Activated CD4-positive, alpha-beta T cell treated with anti-CD3 and anti-CD28 coated beads, Interleukin-2, amount 10 ng/mL, durations not matched to agents 24 days and 14 days (primary cell): ENCODE measurements at regions of chr11 and their contacts with region 1.

Region 1: DNA sequence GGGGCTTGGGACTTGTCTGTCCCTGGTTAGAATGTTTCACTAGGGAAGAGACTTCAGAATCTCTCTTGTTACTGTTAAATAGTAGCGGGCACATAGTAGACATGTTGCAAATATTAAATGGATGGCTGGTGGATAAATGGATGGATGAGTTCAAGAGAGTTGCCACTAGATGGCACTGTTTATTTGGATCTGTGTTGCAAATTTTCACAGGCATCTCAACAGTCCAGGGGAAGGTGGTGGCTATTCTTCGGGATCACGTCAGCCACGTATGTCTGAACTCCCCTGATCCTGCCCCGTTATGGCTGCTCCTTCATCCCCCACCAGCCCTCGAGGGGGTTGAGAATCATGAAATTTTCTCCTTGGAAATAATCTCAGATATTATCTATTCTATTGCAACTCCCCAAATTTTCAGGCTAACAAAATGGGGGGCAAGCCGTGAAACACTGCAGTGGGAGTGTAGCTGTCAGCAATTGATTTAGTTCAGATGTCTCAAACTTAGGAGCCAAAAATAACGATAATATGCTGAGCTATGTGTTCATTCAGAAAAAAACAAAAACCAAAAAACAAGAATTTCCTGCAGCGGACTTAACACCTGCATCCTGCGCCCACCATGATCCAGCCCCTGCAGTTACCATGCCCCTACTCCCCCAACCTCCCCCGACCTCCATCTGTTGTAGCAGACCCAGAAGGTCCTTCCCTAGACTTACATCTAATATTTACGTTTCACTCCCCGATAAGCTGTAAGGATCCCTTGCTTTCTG is 29.1 kb upstream of the BIRC3 start:
- DNase-seq: peak; percentile 84
- H3K4me3 Mint-ChIP-seq: peak overlapping the region; percentile 41
- H3K27ac Mint-ChIP-seq: peak overlapping the region; percentile 21
- H3K4me1 Mint-ChIP-seq: peaks cover 31% of the 10 kb centered on the region
- H3K27me3 Mint-ChIP-seq: no peaks in the 10 kb centered on the region

Region 2: GRCh38 chr11:102317099-102317767 is 29.1 kb after region 1 on chr11 and contains the start of gene BIRC3:
- intact Hi-C with region 1: loop called (anchors 1 kb)
- DNase-seq: peak; percentile 97
- H3K4me3 Mint-ChIP-seq: peak within 1 kb of the TSS; percentile 91
- H3K27ac Mint-ChIP-seq: peak within 1 kb of the TSS; percentile 93
- H3K4me1 Mint-ChIP-seq: peaks cover 64% of the 10 kb centered on the region
- H3K27me3 Mint-ChIP-seq: peaks cover 2% of the 10 kb centered on the region
- total RNA-seq, gene BIRC3: 100 and 102 TPM in 2 replicates

Region 3: DNA sequence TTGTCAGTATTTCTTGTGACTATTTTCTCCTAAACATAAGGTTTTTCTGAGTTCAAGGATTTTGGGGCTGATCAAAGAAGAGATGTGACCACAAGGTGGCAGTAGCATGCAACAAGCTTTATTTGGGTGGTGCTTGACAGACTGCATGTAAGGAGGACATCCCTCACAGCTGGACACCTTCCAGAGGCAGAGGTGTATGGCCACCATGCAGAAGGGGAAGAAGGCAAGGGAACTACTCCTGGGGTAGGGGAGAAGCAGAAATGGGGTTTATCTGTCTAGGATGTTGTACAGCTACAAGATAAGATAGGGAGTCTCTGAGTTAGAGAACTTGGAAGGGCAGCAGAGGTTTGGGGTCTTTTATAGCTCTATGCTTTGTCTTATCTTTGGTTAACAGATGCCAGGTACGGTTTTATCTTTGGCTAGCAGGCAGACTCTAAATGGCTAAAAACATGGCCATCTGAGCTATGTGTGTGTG is 53.7 kb after region 1 on chr11:
- intact Hi-C with region 1: loop called (anchors 1 kb)
- DNase-seq: peak; percentile 92
- H3K4me3 Mint-ChIP-seq: no peak overlapping the region
- H3K27ac Mint-ChIP-seq: no peak overlapping the region
- H3K4me1 Mint-ChIP-seq: peaks cover 28% of the 10 kb centered on the region
- H3K27me3 Mint-ChIP-seq: no peaks in the 10 kb centered on the region

Region 4: GRCh38 chr11:102495161-102496042 is 207.3 kb after region 1 on chr11:
- intact Hi-C with region 1: loop called (anchors 1 kb)
- DNase-seq: peak; percentile 86
- H3K4me3 Mint-ChIP-seq: no peak overlapping the region
- H3K27ac Mint-ChIP-seq: peak overlapping the region; percentile 24
- H3K4me1 Mint-ChIP-seq: peaks cover 27% of the 10 kb centered on the region
- H3K27me3 Mint-ChIP-seq: peaks cover 14% of the 10 kb centered on the region

Region 5: DNA sequence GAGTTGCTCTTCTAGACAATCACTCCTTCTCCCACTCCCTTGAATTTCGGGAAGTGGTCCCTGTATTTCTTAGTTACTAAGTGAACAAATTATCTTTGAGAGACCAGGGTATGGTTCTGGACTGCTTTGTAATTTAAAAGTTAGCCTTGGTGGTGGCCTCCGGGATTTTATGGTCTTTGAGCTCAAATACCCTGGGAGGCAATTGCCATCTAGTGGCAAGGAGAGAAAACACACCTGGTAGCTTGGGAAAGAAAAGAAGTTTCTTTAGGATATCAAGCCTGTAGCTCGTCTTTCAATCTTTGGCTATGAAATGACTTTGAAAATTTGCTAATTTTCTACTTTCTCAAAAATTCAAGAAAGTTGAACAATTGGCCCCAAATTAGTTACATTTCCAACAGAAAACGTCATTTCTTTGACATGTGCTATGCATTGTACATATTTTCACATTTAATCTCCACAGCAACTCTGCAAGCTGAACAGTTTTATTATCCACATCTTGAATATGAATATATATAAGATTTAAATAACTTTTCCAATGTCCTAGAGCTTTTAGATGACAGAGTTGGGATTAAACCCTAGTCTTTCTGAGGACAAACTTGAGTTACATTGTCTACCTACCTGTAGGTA is 378.3 kb after region 1 on chr11:
- intact Hi-C with region 1: loop called (anchors 5 kb)
- DNase-seq: peak; percentile 71
- H3K4me3 Mint-ChIP-seq: no peak overlapping the region
- H3K27ac Mint-ChIP-seq: no peak overlapping the region
- H3K4me1 Mint-ChIP-seq: no peaks in the 10 kb centered on the region
- H3K27me3 Mint-ChIP-seq: peaks cover 12% of the 10 kb centered on the region